CD4-positive, alpha-beta memory T cell (primary cell): ENCODE measurements at regions of chr11 and their contacts with region 1.

Region 1: GRCh38 chr11:122578168-122578825 is 77.2 kb upstream of the UBASH3B start:
- DNase-seq: no peak
- H3K4me3 ChIP-seq: no peak overlapping the region
- H3K4me3 Mint-ChIP-seq: no peak overlapping the region
- H3K27ac ChIP-seq: no peak overlapping the region
- H3K27ac Mint-ChIP-seq: no peak overlapping the region
- H3K4me1 ChIP-seq: peaks cover 8% of the 10 kb centered on the region
- H3K4me1 Mint-ChIP-seq: peaks cover 5 to 9% (median 9%) of the 10 kb centered on the region in 4 donors
- H3K27me3 ChIP-seq: no peaks in the 10 kb centered on the region
- H3K27me3 Mint-ChIP-seq: peaks cover 2 to 7% of the 10 kb centered on the region in 2 donors

Region 2: GRCh38 chr11:121655537-121656327 is 922.6 kb before region 1 on chr11:
- CTCF ChIA-PET with region 1: no interaction called
- POLR2A ChIA-PET with region 1: no interaction called
- intact Hi-C with region 1: loop called (anchors 1 kb)
- DNase-seq: peak; percentile 53 to 60 (median 56)
- H3K4me3 ChIP-seq: peak overlapping the region; percentile 49 to 54
- H3K4me3 Mint-ChIP-seq: peak overlapping the region; percentile 76 to 91 (median 87)
- H3K27ac ChIP-seq: peak overlapping the region; percentile 23
- H3K27ac Mint-ChIP-seq: peak overlapping the region; percentile 1 to 89 (median 68)
- H3K4me1 ChIP-seq: peaks cover 16% of the 10 kb centered on the region
- H3K4me1 Mint-ChIP-seq: peaks cover 13 to 35% (median 23%) of the 10 kb centered on the region in 4 donors
- H3K27me3 ChIP-seq: no peaks in the 10 kb centered on the region
- H3K27me3 Mint-ChIP-seq: no peaks in the 10 kb centered on the region

Region 3: DNA sequence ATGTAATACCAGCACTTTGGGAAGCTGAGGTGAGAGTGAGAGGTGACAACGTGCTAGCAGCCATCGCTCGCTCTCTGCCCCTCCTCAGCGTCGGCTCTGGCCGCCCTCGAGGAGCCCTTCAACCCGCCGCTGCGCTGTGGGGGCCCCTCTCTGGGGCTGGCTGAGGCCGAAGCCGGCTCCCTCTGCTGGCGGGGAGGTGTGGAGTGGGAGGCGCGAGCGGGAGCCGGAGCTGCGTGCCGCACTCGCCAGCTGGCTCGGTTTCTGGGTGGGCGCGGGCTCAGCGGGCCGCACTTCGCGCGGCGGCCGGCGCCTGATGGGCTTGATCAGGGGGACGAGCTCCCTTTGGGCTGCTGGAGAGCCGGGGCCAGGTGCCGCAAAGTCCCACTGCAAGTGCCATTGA is 21.7 kb before region 1 on chr11:
- CTCF ChIA-PET with region 1: interaction called, 10 read pairs
- POLR2A ChIA-PET with region 1: no interaction called
- intact Hi-C with region 1: no loop called
- DNase-seq: peak in 2 of 5 donors; percentile 4 to 12
- H3K4me3 ChIP-seq: no peak overlapping the region
- H3K4me3 Mint-ChIP-seq: peak overlapping the region in 2 of 8 donors; percentile 8 to 13
- H3K27ac ChIP-seq: no peak overlapping the region
- H3K27ac Mint-ChIP-seq: no peak overlapping the region
- H3K4me1 ChIP-seq: no peaks in the 10 kb centered on the region
- H3K4me1 Mint-ChIP-seq: peaks cover 0 to 4% (median 0%) of the 10 kb centered on the region in 4 donors
- H3K27me3 ChIP-seq: no peaks in the 10 kb centered on the region
- H3K27me3 Mint-ChIP-seq: peaks cover 16 to 19% of the 10 kb centered on the region in 2 donors